ENCODE measurements at regions of chr17 and their contacts with region 1.

Region 1: GRCh38 chr17:39547713-39548478 is 59.8 kb downstream of the NEUROD2 start:
- DNase-seq: peak in 1 of 2 experiments; percentile 98
- H3K4me3 ChIP-seq: no peak overlapping the region
- H3K27ac ChIP-seq: no peak overlapping the region
- H3K4me1 ChIP-seq: no peaks in the 10 kb centered on the region
- H3K27me3 ChIP-seq: no peaks in the 10 kb centered on the region
- CTCF ChIP-seq: peak; percentile 90 to 92 (median 92)
- EP300 ChIP-seq: no peak
- POLR2A ChIP-seq: no peak
- RAD21 ChIP-seq: peak; percentile 87 to 91

Region 2: DNA sequence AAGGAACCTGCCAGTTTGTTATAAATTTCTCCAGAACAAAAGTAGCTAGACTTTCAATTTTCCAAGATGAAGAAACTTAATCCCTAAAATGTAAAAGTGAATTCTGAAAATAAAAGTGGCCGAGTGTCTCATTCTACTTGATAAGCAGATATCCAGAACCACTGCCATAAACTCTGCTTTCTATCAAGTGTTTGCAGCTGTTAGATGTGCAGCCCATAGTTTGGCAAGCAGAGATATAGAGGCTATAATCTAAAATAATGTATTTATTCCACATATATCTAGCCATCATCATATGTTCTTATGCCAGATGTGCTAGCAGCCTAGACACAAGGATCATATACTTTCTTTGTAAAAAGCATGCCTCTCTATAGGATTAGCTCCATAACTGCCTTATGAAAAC is 131.8 kb before region 1 on chr17:
- CTCF ChIA-PET with region 1: no interaction called
- POLR2A ChIA-PET with region 1: no interaction called
- DNase-seq: no peak
- H3K4me3 ChIP-seq: no peak overlapping the region
- H3K27ac ChIP-seq: no peak overlapping the region
- H3K4me1 ChIP-seq: no peaks in the 10 kb centered on the region
- H3K27me3 ChIP-seq: no peaks in the 10 kb centered on the region
- CTCF ChIP-seq: no peak
- EP300 ChIP-seq: no peak
- POLR2A ChIP-seq: no peak
- RAD21 ChIP-seq: no peak

Region 3: DNA sequence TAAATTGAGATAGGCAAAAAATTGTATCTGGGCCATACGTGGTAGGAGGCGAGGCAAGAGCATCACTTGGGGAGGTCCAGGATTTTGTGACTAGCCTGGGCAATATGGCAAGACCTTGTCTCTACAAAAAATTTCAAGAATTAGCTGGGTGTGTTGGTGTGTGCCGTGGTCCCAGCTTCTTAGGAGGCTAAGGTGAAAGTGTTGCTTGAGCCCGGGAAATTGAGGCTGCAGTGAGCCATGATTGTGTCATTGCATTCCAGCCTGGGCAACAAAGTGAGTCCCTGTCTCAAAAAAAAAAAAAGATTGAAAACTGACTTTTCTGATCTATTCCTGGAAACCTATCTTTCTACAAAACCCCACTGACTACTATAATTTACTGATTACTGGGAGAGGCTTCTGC is 60.0 kb before region 1 on chr17:
- CTCF ChIA-PET with region 1: no interaction called
- POLR2A ChIA-PET with region 1: no interaction called
- DNase-seq: no peak
- H3K4me3 ChIP-seq: no peak overlapping the region
- H3K27ac ChIP-seq: no peak overlapping the region
- H3K4me1 ChIP-seq: no peaks in the 10 kb centered on the region
- H3K27me3 ChIP-seq: no peaks in the 10 kb centered on the region
- CTCF ChIP-seq: no peak
- EP300 ChIP-seq: no peak
- POLR2A ChIP-seq: no peak
- RAD21 ChIP-seq: no peak

Region 4: DNA sequence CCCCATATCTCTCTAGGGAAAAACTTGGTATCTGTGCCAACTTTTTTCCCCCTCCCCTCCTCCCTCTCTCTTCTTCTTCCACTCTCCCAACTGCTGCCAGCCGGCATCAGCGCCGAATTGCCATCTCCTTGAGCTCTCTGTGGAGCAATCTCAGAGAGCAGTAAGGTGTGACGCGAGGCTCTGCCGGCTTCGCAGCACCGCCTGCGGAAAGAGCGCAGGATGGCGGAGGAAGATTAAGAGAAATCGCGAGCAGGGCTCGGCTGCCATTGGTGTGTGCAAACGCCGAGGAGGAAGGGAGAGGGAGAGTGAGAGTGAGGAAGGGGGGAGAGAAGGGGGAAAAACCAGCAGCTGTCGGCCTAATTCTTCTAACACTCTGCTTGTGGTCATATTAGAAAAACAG is 15.6 kb after region 1 on chr17:
- CTCF ChIA-PET with region 1: interaction called, 216 read pairs
- POLR2A ChIA-PET with region 1: interaction called, 3 read pairs
- DNase-seq: peak in 1 of 2 experiments; percentile 62
- H3K4me3 ChIP-seq: peak overlapping the region in 1 of 4 experiments; percentile 26; a peak in 3 of 8 replicates
- H3K27ac ChIP-seq: peak overlapping the region; percentile 29
- H3K4me1 ChIP-seq: peaks cover 4 to 7% (median 6%) of the 10 kb centered on the region in 4 experiments; a peak in 5 of 7 replicates
- H3K27me3 ChIP-seq: no peaks in the 10 kb centered on the region
- CTCF ChIP-seq: no peak
- EP300 ChIP-seq: no peak
- POLR2A ChIP-seq: no peak; a peak in 1 of 3 replicates
- RAD21 ChIP-seq: no peak

Region 5: DNA sequence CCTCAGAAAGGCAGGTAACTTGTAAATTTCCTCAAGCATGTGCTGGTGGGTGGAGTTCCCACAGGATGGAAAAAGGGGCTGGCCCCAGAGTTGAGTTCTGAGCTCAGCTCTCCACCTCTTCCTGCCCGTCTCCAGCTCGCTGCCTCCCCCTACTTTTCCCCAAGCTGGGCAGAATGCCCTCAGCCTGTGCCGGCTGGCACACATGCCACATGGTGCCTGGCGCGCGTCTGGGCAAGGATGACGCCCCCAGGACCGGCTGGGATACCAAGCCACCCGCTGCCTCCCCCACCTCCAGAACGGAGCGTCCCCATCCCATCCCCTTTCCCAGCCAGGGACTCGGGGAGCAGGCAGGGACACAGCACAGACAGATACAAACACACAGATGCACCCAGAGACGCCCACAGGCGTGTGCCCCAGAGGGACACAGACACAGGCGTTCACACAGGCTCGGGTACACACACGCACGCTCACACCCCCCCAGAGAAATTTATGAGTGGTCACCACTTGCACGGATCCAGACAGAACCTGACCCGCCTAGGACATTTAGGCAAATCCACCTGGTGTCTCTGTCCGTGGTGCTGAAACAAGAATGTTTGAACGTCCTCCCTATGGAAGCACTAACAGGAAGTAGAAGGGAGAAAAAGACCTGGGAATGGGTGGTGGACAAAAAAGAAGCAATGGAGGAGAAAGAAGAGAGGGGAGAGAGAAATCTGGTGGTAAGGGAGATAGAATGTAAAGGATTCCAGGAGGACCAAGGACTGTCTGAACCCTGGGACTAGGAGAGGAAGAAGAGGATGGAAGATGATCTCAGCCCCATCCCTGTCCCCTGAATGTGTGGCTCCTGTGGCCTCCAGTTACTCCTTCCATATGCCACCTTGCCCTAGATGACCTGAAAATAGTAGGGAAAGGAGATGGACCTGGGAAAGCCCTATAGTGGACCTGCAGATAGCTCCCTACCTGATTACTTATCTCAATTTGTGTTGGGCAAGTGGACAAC is 44.4 kb after region 1 on chr17:
- CTCF ChIA-PET with region 1: interaction called, 46 read pairs
- POLR2A ChIA-PET with region 1: interaction called, 3 read pairs
- DNase-seq: peak in 1 of 2 experiments; percentile 90
- H3K4me3 ChIP-seq: peak overlapping the region in 2 of 4 experiments; percentile 23 to 44; a peak in 5 of 8 replicates
- H3K27ac ChIP-seq: no peak overlapping the region
- H3K4me1 ChIP-seq: peaks cover 5 to 29% (median 17%) of the 10 kb centered on the region in 4 experiments
- H3K27me3 ChIP-seq: peaks cover 23 to 50% (median 47%) of the 10 kb centered on the region in 4 experiments
- CTCF ChIP-seq: no peak
- EP300 ChIP-seq: no peak
- POLR2A ChIP-seq: no peak
- RAD21 ChIP-seq: no peak

Region 6: DNA sequence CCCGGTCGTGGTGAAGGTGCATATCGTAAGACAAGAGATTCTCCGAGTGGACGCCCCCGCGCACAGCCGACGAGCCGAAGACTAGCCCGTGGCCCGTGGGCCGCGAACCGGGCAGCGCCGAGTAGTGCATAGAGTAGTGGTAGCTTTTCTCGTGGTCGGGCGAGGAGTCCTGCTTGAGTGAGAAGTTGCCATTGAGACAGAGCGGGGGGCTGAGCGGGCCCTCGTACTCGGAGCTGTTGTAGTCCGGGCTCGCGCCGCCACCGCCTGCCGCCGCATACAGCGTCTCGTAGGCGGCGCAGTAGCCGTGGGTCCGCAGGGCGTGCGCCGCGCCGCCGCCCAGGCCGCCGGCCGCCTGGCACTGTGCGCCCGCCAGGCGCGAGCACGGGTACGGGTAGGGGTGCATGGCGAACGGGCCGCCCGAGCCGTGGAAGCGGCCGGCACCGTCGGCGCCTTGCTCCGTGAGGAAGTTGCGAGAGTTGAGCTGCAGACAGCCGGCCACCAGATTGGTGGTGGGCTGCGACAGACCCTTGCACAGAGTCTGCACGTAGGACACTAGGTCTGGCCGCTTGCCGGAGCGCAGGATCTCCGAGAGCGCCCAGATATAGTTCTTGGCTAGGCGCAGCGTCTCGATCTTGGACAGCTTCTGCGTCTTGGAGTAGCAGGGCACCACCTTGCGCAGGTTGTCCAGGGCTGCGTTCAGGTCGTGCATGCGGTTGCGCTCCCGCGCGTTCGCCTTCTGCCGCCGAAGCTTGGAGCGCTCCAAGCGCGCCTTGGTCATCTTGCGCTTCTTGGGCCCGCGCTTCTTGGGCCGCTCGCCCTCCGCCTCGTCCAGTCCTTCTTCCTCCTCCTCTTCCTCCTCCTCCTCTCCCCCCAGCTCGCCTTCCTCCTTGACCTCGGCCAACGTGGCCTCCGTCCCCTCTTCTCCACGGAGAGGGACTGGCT is 57.9 kb after region 1 on chr17:
- CTCF ChIA-PET with region 1: interaction called, 310 read pairs
- POLR2A ChIA-PET with region 1: interaction called, 5 read pairs
- DNase-seq: peak in 1 of 2 experiments; percentile 81
- H3K4me3 ChIP-seq: peak overlapping the region; percentile 19 to 59 (median 34); a peak in 7 of 8 replicates
- H3K27ac ChIP-seq: no peak overlapping the region
- H3K4me1 ChIP-seq: peaks cover 5 to 50% (median 28%) of the 10 kb centered on the region in 4 experiments
- H3K27me3 ChIP-seq: peaks cover 78 to 95% (median 91%) of the 10 kb centered on the region in 4 experiments
- CTCF ChIP-seq: no peak
- EP300 ChIP-seq: no peak
- POLR2A ChIP-seq: no peak
- RAD21 ChIP-seq: no peak

Region 7: DNA sequence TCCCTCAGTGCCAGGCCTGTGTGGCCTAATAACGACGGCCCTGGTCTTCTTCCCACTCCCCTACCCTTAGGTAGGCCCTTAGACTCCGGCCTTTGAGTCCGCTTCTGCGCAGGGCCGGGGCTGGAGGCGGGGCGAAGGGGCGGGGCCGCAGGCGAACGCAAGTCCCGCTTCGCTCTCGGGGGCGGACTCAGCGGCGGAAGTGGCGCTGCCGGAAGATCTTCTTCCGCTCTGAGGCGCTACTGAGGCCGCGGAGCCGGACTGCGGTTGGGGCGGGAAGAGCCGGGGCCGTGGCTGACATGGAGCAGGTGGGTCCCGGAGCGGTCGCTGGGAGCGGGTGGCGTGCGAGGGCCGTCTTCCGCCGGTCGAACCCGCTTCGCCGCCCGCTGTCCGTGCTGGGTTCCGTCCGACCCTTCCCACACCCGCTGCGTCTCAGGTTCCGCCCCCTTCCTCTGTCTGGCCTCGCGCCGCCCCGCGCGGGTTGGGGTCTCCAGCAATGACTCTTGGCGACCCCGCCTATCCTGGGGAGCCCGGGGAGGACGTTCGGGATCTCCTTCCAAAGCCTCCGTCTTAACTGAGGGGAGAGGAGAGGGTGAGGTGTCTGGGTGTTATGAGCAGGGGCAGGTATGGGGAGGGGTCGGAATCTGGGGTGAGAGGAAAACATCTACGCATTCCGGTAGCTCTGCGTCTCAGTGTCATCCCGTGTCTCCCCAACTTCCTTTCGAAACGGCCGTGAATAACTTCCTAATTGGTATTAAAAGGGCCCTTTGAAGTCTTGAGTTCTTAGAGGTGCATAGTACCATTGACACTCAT is 89.2 kb after region 1 on chr17 and contains the start of gene STARD3:
- CTCF ChIA-PET with region 1: interaction called, 18 read pairs
- POLR2A ChIA-PET with region 1: no interaction called
- DNase-seq: peak in 1 of 2 experiments; percentile 92
- H3K4me3 ChIP-seq: peak within 1 kb of the TSS; percentile 79 to 91 (median 85)
- H3K27ac ChIP-seq: peak within 1 kb of the TSS; percentile 64; the same call in 1 of the 2 replicates
- H3K4me1 ChIP-seq: peaks cover 13 to 40% (median 26%) of the 10 kb centered on the region in 4 experiments
- H3K27me3 ChIP-seq: 0 out of 7 replicates have a peak, but pooled peaks cover 0 to 3% (median 0%) of the 10 kb centered on the region in 4 experiments
- CTCF ChIP-seq: peak in 2 of 3 experiments; percentile 18 to 32; a peak in 3 of 4 replicates
- EP300 ChIP-seq: 0 out of 3 replicates have a peak, but pooled peaks of 1 of the 2 experiments have one; percentile 22
- POLR2A ChIP-seq: peak in 1 of 2 experiments; percentile 61; a peak in 2 of 3 replicates
- RAD21 ChIP-seq: 0 out of 4 replicates have a peak, but pooled peaks of 1 of the 2 experiments have one; percentile 6
- total RNA-seq, gene STARD3: 47.6 and 56.7 TPM in 2 replicates

Measured in H1 (cell line).